ENCODE measurements at regions of chr1 and their contacts with region 1.

Region 1: GRCh38 chr1:47934243-47934805 is 62.9 kb downstream of the TRABD2B start:
- DNase-seq: no peak
- ATAC-seq: no peak
- H3K4me3 ChIP-seq: no peak overlapping the region
- H3K27ac ChIP-seq: no peak overlapping the region
- H3K4me1 ChIP-seq: 0 out of 4 replicates have a peak, but pooled peaks cover 0 to 3% of the 10 kb centered on the region in 2 experiments
- H3K27me3 ChIP-seq: peaks cover 2% of the 10 kb centered on the region
- CTCF ChIP-seq: no peak
- POLR2A ChIP-seq: no peak
- RAD21 ChIP-seq: no peak

Region 2: DNA sequence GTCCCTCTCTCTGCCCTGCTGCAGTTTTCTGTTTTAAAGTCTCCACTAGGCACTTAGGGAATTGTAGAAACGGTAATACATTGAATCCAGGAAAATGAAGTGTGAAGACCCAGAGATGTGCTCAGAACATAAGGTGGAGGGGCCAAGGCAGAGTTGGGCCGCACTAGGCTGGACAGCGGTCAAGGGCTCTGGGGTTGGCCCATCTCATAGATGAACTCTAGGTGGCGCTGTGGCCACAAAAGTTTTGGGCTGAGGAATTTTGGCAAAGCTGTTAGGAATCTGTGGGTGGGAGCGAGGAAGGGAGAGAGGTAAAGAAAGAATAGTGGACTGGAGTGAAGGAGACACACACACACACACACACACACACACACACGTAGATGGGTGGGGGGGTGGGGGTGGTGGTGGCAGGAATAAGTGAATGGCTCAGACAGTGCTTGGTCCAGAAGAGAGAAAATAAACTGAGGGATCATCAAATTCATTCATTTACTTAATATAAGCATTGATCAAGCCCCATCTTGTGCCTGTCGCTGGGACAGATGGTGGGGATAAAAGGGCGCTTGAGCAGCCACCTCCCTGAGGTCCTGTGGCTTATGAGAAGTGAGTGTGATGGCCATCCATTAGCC is 195.7 kb before region 1 on chr1:
- CTCF ChIA-PET with region 1: interaction called, 5 read pairs
- POLR2A ChIA-PET with region 1: no interaction called
- RAD21 ChIA-PET with region 1: no interaction called
- intact Hi-C with region 1: loop called (anchors 1 kb)
- DNase-seq: no peak
- ATAC-seq: peak; percentile 95
- H3K4me3 ChIP-seq: no peak overlapping the region
- H3K27ac ChIP-seq: no peak overlapping the region
- H3K4me1 ChIP-seq: no peaks in the 10 kb centered on the region
- H3K27me3 ChIP-seq: peaks cover 6% of the 10 kb centered on the region; the same call in 1 of the 2 replicates
- CTCF ChIP-seq: peak; percentile 50 to 85 (median 74); a peak in 5 of 6 replicates
- POLR2A ChIP-seq: no peak
- RAD21 ChIP-seq: peak; percentile 73

Region 3: GRCh38 chr1:47785561-47786271 is 148.6 kb before region 1 on chr1:
- CTCF ChIA-PET with region 1: interaction called, 6 read pairs
- POLR2A ChIA-PET with region 1: no interaction called
- RAD21 ChIA-PET with region 1: no interaction called
- intact Hi-C with region 1: loop called (anchors 5 kb)
- DNase-seq: no peak
- ATAC-seq: peak; percentile 74
- H3K4me3 ChIP-seq: no peak overlapping the region
- H3K27ac ChIP-seq: no peak overlapping the region
- H3K4me1 ChIP-seq: no peaks in the 10 kb centered on the region
- H3K27me3 ChIP-seq: peaks cover 3% of the 10 kb centered on the region; the same call in 1 of the 2 replicates
- CTCF ChIP-seq: peak in 2 of 3 experiments; percentile 22 to 29; a peak in 2 of 6 replicates
- POLR2A ChIP-seq: no peak
- RAD21 ChIP-seq: peak; percentile 40

Region 4: DNA sequence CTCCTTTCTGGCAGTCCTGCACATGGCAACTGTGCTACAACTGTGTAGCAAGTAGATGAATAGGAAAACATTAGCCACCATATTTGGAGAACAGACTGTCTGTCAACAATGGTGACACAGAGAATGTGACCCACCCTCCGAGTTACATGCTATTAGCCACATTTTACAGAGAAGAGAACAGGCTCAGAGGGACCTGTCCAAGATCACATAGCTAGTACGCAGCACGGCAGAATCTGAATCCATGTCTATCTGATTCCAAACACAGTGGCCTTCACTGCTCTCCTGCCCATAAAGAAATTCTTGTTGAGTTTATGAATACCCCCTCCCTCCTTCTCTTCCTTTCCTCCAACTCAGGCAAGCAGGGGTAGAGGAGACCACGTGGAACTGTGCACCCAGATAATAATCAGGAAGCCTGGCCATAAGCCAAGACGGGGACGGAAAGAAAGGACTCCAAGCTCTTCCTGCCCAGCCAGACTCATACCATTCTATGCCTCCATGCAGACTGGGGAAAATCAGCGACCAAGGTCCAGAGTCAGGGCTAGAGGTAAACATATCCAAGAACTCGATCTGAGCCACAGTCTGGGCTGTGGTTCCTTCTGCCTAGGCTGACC is 16.0 kb before region 1 on chr1:
- CTCF ChIA-PET with region 1: no interaction called
- POLR2A ChIA-PET with region 1: no interaction called
- RAD21 ChIA-PET with region 1: no interaction called
- intact Hi-C with region 1: no loop called
- DNase-seq: no peak
- ATAC-seq: no peak
- H3K4me3 ChIP-seq: no peak overlapping the region
- H3K27ac ChIP-seq: no peak overlapping the region
- H3K4me1 ChIP-seq: no peaks in the 10 kb centered on the region
- H3K27me3 ChIP-seq: peaks cover 7% of the 10 kb centered on the region; the same call in 1 of the 2 replicates
- CTCF ChIP-seq: no peak
- POLR2A ChIP-seq: no peak
- RAD21 ChIP-seq: no peak

Measured in HCT116 (cell line).